Activated CD4-positive, alpha-beta T cell treated with anti-CD3 and anti-CD28 coated beads, Interleukin-2, amount 10 ng/mL, durations not matched to agents 24 days and 14 days (primary cell): ENCODE measurements at regions of chr20 and their contacts with region 1.

Region 1: GRCh38 chr20:48921151-48921898 is at the start of gene ARFGEF2:
- DNase-seq: peak; percentile 100
- H3K4me3 Mint-ChIP-seq: peak within 1 kb of the TSS; percentile 95
- H3K27ac Mint-ChIP-seq: peak within 1 kb of the TSS; percentile 97
- H3K4me1 Mint-ChIP-seq: peaks cover 37% of the 10 kb centered on the region
- H3K27me3 Mint-ChIP-seq: peaks cover 4% of the 10 kb centered on the region
- total RNA-seq, gene ARFGEF2: 28.0 and 30.9 TPM in 2 replicates

Region 2: GRCh38 chr20:48846498-48847485 is 74.5 kb before region 1 on chr20:
- intact Hi-C with region 1: loop called (anchors 5 kb)
- DNase-seq: peak; percentile 67
- H3K4me3 Mint-ChIP-seq: peak overlapping the region; percentile 23
- H3K27ac Mint-ChIP-seq: peak overlapping the region; percentile 89
- H3K4me1 Mint-ChIP-seq: peaks cover 21% of the 10 kb centered on the region
- H3K27me3 Mint-ChIP-seq: peaks cover 17% of the 10 kb centered on the region

Region 3: DNA sequence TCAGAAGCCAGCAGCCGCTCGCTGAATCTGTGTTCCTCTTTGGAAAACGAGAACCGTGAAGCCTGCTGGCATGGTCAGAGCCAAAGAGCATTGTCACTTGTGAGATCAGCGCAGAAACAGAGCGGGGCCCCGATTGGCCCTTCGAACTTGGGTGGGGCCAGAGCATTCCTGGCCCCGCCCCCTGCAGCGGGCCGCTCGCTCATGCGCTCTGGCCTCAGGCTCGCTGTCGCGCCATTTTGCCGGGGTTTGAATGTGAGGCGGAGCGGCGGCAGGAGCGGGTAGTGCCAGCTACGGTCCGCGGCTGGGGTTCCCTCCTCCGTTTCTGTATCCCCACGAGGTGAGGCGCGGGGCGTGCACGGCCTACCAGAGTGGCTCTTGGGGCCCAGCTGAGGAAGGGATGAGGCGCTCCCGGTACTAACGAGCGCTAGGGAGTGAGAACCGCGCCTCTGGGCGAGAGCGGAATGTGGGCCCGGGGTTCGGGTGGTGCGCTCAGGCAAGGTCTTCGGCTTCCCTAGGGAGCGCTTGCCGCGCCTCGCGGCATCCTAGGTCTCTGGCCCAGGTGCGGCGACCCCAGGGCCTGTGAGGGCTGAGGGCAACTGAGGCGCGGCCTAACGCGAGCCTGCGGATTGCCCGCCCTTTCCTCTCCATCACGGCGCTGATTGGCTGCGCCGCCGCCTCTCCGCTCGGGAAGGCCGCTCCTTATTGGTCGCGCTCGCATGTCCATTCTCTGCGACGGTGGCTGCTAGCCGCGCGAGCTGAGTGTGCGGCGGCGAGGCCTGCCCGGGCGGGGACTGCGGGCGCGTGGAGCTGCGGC is 125.0 kb after region 1 on chr20 and contains the start of gene CSE1L:
- intact Hi-C with region 1: loop called (anchors 1 kb)
- DNase-seq: peak; percentile 99
- H3K4me3 Mint-ChIP-seq: peak within 1 kb of the TSS; percentile 99
- H3K27ac Mint-ChIP-seq: peak within 1 kb of the TSS; percentile 100
- H3K4me1 Mint-ChIP-seq: peaks cover 28% of the 10 kb centered on the region
- H3K27me3 Mint-ChIP-seq: no peaks in the 10 kb centered on the region
- total RNA-seq, gene CSE1L: 135 and 136 TPM in 2 replicates